ENCODE measurements at regions of chr4 and their contacts with region 1.

Region 1: GRCh38 chr4:147617173-147617840 is at the start of gene TMEM184C:
- DNase-seq: peak; percentile 99
- H3K4me3 Mint-ChIP-seq: peak within 1 kb of the TSS; percentile 89
- H3K27ac Mint-ChIP-seq: peak within 1 kb of the TSS; percentile 92
- H3K4me1 Mint-ChIP-seq: peaks cover 34% of the 10 kb centered on the region
- H3K27me3 Mint-ChIP-seq: peaks cover 9% of the 10 kb centered on the region
- total RNA-seq, gene TMEM184C: 16.5 to 18.8 TPM

Region 2: DNA sequence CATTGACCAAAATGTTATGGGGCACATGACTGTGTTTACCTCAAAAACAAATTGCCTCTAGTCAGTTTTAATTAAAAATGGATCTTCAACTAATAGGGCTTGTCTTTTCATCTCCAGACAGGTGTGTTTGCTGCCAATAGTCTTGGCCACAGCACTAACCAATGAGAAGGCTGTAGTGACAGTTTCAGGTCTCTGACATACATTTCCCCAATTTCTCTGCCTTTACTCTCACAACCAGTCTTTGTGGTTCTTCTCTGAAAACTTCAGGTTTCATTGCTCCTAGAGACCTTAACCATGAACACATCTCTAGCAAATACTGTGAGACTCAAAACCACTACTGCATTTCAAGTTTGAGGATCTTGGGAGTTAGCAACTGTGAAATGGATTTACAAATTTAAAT is 139.9 kb before region 1 on chr4:
- CTCF ChIA-PET with region 1: no interaction called
- POLR2A ChIA-PET with region 1: no interaction called
- DNase-seq: no peak
- H3K4me3 Mint-ChIP-seq: no peak overlapping the region
- H3K27ac Mint-ChIP-seq: no peak overlapping the region
- H3K4me1 Mint-ChIP-seq: no peaks in the 10 kb centered on the region
- H3K27me3 Mint-ChIP-seq: peaks cover 25% of the 10 kb centered on the region

Region 3: GRCh38 chr4:147629783-147630730 is 12.8 kb after region 1 on chr4:
- CTCF ChIA-PET with region 1: interaction called, 8 read pairs
- POLR2A ChIA-PET with region 1: interaction called, 16 read pairs
- DNase-seq: no peak
- H3K4me3 Mint-ChIP-seq: no peak overlapping the region
- H3K27ac Mint-ChIP-seq: no peak overlapping the region
- H3K4me1 Mint-ChIP-seq: no peaks in the 10 kb centered on the region
- H3K27me3 Mint-ChIP-seq: no peaks in the 10 kb centered on the region

Region 4: GRCh38 chr4:147683717-147684700 is 66.7 kb after region 1 on chr4 and contains the start of gene PRMT9:
- CTCF ChIA-PET with region 1: interaction called, 17 read pairs
- POLR2A ChIA-PET with region 1: interaction called, 54 read pairs
- DNase-seq: peak; percentile 91
- H3K4me3 Mint-ChIP-seq: peak within 1 kb of the TSS; percentile 89
- H3K27ac Mint-ChIP-seq: peak within 1 kb of the TSS; percentile 83
- H3K4me1 Mint-ChIP-seq: peaks cover 46% of the 10 kb centered on the region
- H3K27me3 Mint-ChIP-seq: peaks cover 7% of the 10 kb centered on the region
- total RNA-seq, gene PRMT9: 11.0 to 12.0 TPM

Region 5: DNA sequence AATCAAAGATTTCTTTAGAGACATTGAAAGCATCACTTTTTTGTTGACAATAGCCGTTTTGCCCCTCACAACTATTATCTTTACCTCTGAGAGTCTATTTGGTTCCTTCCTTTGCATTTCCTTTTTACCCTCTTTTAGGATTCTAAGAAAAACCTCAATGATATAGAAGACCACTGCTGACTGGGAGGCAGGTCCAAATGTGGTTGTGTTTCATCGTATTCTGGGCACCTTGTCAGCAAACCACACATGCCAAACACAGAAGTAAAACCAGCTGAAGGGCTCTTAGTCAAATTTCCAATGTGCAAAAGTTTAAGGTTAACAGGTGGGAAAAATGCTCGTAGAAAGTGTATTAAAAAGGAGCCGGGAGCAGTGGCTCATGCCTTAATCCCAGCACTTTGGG is 71.8 kb after region 1 on chr4:
- CTCF ChIA-PET with region 1: interaction called, 17 read pairs
- POLR2A ChIA-PET with region 1: interaction called, 54 read pairs
- DNase-seq: peak; percentile 59
- H3K4me3 Mint-ChIP-seq: peak overlapping the region; percentile 38
- H3K27ac Mint-ChIP-seq: peak overlapping the region; percentile 89
- H3K4me1 Mint-ChIP-seq: peaks cover 34% of the 10 kb centered on the region
- H3K27me3 Mint-ChIP-seq: peaks cover 11% of the 10 kb centered on the region

Region 6: DNA sequence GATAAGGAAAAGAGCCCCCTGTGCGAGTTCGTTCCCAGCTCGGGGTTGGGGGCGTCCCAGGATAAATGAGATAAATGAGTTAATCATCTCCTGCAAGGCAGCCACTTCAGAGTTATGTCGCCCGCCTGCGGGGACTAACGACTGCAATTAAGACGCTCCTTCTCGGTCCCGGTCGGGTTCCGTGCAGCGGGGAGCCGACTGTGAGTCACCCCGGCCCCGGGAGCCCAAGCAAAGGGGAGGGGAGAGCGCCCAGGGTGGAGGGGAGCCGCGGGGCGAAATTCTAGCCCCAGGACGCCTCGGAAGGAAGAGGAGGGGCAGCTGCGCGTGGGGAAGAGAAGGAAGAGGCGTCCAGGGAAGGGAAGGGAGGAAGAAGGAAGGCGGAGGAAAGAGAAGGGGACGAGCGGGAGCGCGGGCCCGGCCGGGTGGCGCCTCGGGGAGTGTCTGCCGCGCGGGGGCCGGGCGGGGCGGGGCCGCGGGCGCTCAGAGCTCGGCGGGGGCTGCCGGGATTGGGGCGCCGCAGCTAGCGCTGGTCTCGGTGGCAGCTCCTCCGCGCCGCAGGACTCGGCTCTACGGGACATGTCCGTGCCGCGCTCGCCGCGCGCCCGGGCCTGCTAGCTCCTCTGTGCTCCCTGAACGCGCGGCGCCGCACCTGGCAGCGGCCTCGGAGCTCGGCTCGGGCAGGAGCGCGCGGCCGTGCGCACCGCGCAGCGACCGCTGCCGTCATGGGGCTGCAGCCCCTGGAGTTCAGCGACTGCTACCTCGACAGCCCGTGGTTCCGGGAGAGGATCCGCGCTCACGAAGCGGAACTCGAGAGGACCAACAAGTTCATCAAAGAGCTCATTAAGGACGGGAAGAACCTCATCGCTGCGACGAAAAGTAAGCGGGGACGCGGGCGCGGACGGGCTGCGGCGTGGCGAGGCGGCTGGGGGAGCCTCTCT is 114.5 kb after region 1 on chr4 and contains the start of gene ARHGAP10:
- CTCF ChIA-PET with region 1: interaction called, 14 read pairs
- POLR2A ChIA-PET with region 1: interaction called, 35 read pairs
- DNase-seq: peak; percentile 71
- H3K4me3 Mint-ChIP-seq: peak within 1 kb of the TSS; percentile 95
- H3K27ac Mint-ChIP-seq: peak within 1 kb of the TSS; percentile 91
- H3K4me1 Mint-ChIP-seq: peaks cover 55% of the 10 kb centered on the region
- H3K27me3 Mint-ChIP-seq: peaks cover 12% of the 10 kb centered on the region
- total RNA-seq, gene ARHGAP10: 19.7 to 22.2 TPM

Region 7: DNA sequence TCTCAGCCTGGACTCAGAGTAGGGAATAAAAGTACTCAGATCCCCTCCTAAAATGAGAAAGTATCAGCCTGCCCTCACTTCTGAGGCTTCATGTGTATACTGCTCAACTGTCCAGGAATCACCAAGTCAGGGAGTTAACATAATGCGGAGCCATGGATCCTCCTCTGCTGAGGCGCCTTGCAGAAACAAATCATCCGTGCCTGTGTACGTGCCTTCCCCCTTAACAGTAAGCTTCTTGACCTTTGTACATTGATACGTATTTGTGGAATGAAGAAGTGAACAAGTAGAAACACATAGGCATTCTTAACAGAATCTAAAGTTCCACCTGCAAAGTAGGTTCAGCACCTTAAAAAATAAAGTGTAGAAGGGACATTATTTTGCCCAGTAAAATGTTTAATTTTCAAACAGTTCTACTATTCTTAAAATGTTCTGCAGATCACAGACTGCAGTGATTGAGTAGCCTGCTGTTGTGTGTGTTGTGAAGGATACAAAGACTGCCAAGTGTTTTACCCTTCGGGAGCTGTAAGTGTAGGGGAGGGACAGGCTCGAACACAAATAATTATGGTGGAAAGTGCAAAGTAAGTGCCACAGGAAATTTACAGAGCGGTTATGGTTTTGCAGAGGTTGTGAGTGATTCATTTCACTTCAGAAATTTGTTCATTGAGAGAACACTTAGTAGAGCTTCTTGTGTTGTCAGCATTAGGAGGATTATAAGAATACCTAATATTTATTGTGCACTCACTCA is 176.4 kb after region 1 on chr4:
- CTCF ChIA-PET with region 1: no interaction called
- POLR2A ChIA-PET with region 1: interaction called, 10 read pairs
- DNase-seq: peak; percentile 38
- H3K4me3 Mint-ChIP-seq: peak overlapping the region; percentile 5
- H3K27ac Mint-ChIP-seq: peak overlapping the region; percentile 59
- H3K4me1 Mint-ChIP-seq: peaks cover 53% of the 10 kb centered on the region
- H3K27me3 Mint-ChIP-seq: no peaks in the 10 kb centered on the region

Region 8: GRCh38 chr4:148116264-148116663 is 499.0 kb after region 1 on chr4:
- CTCF ChIA-PET with region 1: no interaction called
- POLR2A ChIA-PET with region 1: no interaction called
- DNase-seq: no peak
- H3K4me3 Mint-ChIP-seq: no peak overlapping the region
- H3K27ac Mint-ChIP-seq: no peak overlapping the region
- H3K4me1 Mint-ChIP-seq: no peaks in the 10 kb centered on the region
- H3K27me3 Mint-ChIP-seq: no peaks in the 10 kb centered on the region